ENCODE measurements at regions of chr9 and their contacts with region 1.

Region 1: GRCh38 chr9:69919461-69920061 is 98.9 kb downstream of the CFAP95 start:
- DNase-seq: no peak
- ATAC-seq: peak; percentile 75
- H3K4me3 Mint-ChIP-seq: no peak overlapping the region
- H3K27ac Mint-ChIP-seq: no peak overlapping the region
- H3K4me1 Mint-ChIP-seq: no peaks in the 10 kb centered on the region
- H3K27me3 Mint-ChIP-seq: peaks cover 13% of the 10 kb centered on the region

Region 2: DNA sequence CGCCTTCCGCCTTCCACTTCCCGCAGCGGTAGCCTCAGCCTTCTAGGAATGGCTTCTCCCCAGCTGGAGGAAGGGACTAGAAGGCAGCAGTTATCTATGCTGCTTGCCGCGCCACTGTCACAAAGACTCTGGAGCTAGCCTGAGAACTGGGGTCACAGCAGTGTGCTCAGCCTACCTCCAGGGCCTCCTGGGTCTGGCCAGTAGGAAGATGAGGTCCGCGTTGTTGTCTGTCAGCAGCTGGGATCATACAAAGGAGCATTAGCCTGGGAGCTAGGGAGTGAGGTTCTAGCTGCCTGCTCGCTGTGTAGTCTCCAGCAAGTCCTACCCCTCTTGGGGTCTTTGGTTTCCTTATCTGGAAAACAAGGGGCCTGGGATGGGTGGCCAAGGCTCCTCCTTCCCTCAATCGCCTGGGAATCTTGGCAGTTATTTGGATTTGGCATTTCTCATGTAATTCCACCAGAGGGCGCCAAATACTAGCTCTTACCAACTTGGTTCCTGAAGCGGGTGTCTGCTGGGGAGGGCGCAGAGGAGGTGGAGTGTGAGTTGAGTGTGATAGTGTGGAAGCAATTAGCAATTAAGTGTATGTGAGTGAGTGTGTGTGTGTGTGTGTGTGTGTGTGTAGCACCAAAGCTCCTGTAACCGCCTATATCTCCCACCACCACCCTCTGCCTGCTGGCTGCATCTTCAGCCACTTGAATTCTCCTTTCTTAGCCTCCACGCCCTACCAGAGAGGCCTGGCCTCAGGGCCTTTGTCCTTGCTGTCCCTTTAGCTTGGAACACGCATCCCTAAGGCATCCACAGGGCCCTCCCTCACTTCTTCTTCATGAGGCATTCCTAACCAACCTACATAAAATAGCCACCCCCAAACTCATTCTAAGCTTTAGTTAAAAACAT is 497.4 kb before region 1 on chr9:
- CTCF ChIA-PET with region 1: interaction called, 28 read pairs
- POLR2A ChIA-PET with region 1: no interaction called
- intact Hi-C with region 1: loop called in 1 of 2 experiments (anchors 2 kb)
- DNase-seq: peak; percentile 65
- ATAC-seq: peak; percentile 50
- H3K4me3 Mint-ChIP-seq: no peak overlapping the region
- H3K27ac Mint-ChIP-seq: no peak overlapping the region
- H3K4me1 Mint-ChIP-seq: no peaks in the 10 kb centered on the region
- H3K27me3 Mint-ChIP-seq: peaks cover 17% of the 10 kb centered on the region

Region 3: DNA sequence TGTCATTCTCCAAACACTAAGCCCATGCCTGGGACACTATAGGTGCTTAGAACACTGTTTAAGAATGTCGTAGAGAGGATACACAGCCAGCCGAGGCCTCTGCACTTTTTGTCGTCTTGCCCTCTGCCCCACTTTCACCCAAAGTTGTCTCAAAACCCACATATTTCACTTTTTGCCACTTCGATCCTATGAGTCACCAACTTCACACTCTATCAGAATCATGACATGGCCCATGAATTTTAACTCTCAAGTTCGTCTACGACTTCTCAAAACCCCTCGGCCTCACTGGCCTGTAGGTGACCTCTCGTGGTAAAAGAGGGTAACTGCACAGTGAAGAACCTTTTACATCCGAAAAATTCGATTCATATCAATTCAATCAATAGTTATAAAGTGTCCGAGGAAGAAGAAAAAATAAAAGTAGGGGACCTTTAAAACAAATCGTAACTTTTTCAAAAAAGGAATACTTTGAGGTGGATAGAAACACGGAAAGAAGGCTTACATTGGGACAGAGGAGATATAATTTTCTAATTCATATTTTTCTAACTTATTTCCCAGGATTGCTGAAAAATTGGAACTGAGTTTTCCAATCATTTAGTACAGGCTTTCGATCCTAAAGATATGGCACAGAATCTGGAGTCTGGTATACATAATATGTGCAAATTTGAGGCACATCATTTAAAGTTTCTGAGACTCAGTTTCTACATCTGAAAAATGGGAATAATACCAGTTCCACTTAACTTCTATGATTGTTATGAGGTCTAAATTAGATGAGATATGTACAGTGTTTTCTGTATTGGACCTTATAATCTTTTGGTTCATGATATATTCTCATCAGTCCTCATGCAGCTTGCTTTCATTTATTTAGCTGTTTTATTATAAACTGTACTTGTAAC is 370.0 kb before region 1 on chr9:
- CTCF ChIA-PET with region 1: no interaction called
- POLR2A ChIA-PET with region 1: no interaction called
- intact Hi-C with region 1: loop called in 1 of 2 experiments (anchors 10 kb)
- DNase-seq: peak; percentile 52
- ATAC-seq: peak; percentile 80
- H3K4me3 Mint-ChIP-seq: no peak overlapping the region
- H3K27ac Mint-ChIP-seq: no peak overlapping the region
- H3K4me1 Mint-ChIP-seq: peaks cover 5% of the 10 kb centered on the region
- H3K27me3 Mint-ChIP-seq: peaks cover 13% of the 10 kb centered on the region

Region 4: DNA sequence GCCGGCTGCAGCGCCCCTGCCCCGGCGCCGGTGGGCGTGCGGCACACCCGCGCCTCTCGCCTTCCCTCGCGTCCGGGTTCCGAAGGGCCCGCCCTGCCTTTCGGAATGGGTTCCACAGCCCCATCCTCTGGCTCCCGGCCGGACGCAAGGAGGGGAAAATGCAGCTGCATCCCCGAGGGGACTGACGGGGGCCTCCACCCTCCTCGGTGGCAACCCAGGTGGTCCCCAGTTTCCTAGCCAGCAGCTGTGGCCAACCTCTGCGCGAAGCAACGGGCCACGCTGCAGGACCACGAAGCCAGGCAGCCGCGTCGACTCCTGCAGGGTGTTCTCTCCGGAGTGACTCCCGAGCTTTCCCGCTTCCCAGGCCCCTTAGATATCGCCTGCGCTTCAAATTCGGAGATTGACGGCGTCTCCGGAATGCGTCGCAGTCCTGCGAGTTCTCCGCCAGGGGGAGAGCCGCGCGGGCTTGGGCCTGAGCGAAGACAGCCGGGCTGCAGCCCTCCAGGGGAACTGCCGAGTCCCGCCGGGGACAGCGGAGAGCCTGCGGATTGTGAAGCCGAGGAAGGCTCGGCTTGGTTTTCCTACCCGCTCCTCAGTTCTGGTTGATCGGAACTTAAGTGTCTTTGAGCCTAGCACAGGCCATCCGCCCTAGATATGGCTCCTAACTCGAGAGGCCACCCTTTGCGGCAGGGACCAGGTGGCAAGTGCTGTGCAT is 246.8 kb before region 1 on chr9:
- CTCF ChIA-PET with region 1: interaction called, 7 read pairs
- POLR2A ChIA-PET with region 1: no interaction called
- intact Hi-C with region 1: loop called (anchors 1 kb)
- DNase-seq: peak; percentile 87
- ATAC-seq: peak; percentile 91
- H3K4me3 Mint-ChIP-seq: peak overlapping the region; percentile 67
- H3K27ac Mint-ChIP-seq: no peak overlapping the region
- H3K4me1 Mint-ChIP-seq: no peaks in the 10 kb centered on the region
- H3K27me3 Mint-ChIP-seq: peaks cover 19% of the 10 kb centered on the region

Region 5: GRCh38 chr9:69809304-69809863 is 110.2 kb before region 1 on chr9:
- CTCF ChIA-PET with region 1: interaction called, 6 read pairs
- POLR2A ChIA-PET with region 1: no interaction called
- intact Hi-C with region 1: loop called (anchors 1 to 2 kb)
- DNase-seq: peak; percentile 55
- ATAC-seq: peak; percentile 65
- H3K4me3 Mint-ChIP-seq: no peak overlapping the region
- H3K27ac Mint-ChIP-seq: no peak overlapping the region
- H3K4me1 Mint-ChIP-seq: peaks cover 4% of the 10 kb centered on the region
- H3K27me3 Mint-ChIP-seq: peaks cover 2% of the 10 kb centered on the region

Measured in activated CD4-positive, alpha-beta T cell treated with anti-CD3 and anti-CD28 coated beads for 36 hours (primary cell).